Heart left ventricle (tissue), 16 donors: ENCODE measurements at regions of chr3 and their contacts with region 1.

Region 1: GRCh38 chr3:189721873-189722636 is 90.9 kb downstream of the TP63 start:
- DNase-seq: no peak
- ATAC-seq: no peak
- H3K4me3 ChIP-seq: no peak overlapping the region
- H3K27ac ChIP-seq: no peak overlapping the region
- H3K4me1 ChIP-seq: no peaks in the 10 kb centered on the region
- H3K27me3 ChIP-seq: no peaks in the 10 kb centered on the region
- CTCF ChIP-seq: no peak
- POLR2A ChIP-seq: no peak

Region 2: GRCh38 chr3:189167027-189167766 is 554.9 kb before region 1 on chr3:
- intact Hi-C with region 1: no loop called
- DNase-seq: no peak
- ATAC-seq: no peak
- H3K4me3 ChIP-seq: no peak overlapping the region
- H3K27ac ChIP-seq: no peak overlapping the region
- H3K4me1 ChIP-seq: no peaks in the 10 kb centered on the region
- H3K27me3 ChIP-seq: no peaks in the 10 kb centered on the region
- CTCF ChIP-seq: no peak
- POLR2A ChIP-seq: no peak

Region 3: DNA sequence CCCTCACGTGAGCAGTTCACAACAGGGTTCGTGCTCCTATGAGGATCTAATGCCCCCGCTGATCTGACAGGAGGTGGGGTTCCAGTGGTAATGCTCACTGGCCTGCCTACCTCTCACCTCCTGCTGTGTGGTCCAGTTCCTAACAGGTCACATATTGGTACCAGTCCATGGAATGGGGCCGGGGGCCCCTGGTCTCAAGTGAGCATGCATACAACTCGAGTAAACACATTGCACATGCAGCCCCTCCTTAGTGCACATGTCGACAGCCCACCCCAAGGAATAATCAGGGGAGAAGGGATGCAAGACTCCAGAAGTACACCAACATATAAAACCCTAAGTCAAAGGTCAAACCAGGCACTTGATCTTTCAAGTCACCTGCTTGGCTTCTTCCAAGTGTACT is 36.1 kb after region 1 on chr3:
- intact Hi-C with region 1: loop called in 1 of 10 experiments (anchors 1 kb)
- DNase-seq: peak in 1 of 5 donors; percentile 54
- ATAC-seq: no peak
- H3K4me3 ChIP-seq: no peak overlapping the region
- H3K27ac ChIP-seq: no peak overlapping the region
- H3K4me1 ChIP-seq: no peaks in the 10 kb centered on the region
- H3K27me3 ChIP-seq: no peaks in the 10 kb centered on the region
- CTCF ChIP-seq: no peak
- POLR2A ChIP-seq: no peak